ENCODE measurements at regions of chr1 and their contacts with region 1.

Region 1: DNA sequence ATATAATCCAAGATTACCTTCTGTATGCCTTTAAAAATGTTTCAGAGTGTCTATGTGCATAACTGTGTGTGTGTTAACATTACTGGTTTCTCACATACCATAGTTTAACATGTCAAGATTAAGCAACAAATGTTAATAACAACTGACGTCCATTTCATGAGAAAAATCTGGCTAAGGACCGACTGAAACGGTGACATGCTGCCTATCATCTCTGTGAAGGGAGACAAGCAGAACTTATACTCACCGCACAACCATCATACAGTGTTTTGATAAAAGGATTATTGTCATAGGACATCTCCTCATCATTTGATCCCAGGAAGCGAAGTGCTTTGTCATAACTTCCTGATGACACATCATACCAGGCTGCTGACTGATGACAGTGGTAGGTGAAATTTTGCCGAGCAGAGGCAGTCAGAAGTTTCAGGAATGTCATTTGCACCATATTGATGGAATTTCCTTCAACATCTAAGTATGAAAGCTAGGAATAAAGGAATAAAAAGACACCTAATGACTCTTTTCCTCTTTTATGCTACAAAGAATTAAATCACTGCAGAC is 228.8 kb downstream of the COL11A1 start:
- DNase-seq: peak; percentile 43
- H3K4me3 ChIP-seq: no peak overlapping the region
- H3K27ac ChIP-seq: no peak overlapping the region
- H3K4me1 ChIP-seq: peaks cover 24% of the 10 kb centered on the region
- H3K27me3 ChIP-seq: no peaks in the 10 kb centered on the region
- CTCF ChIP-seq: no peak
- POLR2A ChIP-seq: no peak

Region 2: DNA sequence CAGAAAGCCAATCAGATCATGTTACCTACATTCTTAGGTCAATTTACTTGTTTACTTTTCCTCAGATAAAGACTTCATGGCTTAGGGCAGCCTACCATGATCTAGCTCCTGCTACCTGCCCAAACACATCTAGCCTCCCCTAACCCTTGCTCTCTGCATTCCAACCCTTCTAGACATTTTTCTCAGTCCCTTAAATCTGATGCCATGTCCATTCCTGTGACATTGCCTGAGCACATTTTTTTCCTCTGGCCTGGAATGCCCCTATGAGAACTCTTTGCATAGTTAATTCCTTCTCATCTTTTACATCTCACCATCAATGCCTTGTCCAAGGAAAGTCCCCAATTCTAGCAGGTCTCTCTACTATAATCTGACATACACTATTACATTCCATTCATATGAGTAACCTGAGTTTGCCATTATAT is 61.9 kb after region 1 on chr1:
- CTCF ChIA-PET with region 1: no interaction called
- POLR2A ChIA-PET with region 1: no interaction called
- dilution Hi-C with region 1: no loop called
- intact Hi-C with region 1: loop called (anchors 10 kb)
- DNase-seq: no peak
- H3K4me3 ChIP-seq: no peak overlapping the region
- H3K27ac ChIP-seq: no peak overlapping the region
- H3K4me1 ChIP-seq: no peaks in the 10 kb centered on the region
- H3K27me3 ChIP-seq: no peaks in the 10 kb centered on the region
- CTCF ChIP-seq: no peak
- POLR2A ChIP-seq: no peak